PC-9 (cell line): ENCODE measurements at regions of chr12 and their contacts with region 1.

Region 1: DNA sequence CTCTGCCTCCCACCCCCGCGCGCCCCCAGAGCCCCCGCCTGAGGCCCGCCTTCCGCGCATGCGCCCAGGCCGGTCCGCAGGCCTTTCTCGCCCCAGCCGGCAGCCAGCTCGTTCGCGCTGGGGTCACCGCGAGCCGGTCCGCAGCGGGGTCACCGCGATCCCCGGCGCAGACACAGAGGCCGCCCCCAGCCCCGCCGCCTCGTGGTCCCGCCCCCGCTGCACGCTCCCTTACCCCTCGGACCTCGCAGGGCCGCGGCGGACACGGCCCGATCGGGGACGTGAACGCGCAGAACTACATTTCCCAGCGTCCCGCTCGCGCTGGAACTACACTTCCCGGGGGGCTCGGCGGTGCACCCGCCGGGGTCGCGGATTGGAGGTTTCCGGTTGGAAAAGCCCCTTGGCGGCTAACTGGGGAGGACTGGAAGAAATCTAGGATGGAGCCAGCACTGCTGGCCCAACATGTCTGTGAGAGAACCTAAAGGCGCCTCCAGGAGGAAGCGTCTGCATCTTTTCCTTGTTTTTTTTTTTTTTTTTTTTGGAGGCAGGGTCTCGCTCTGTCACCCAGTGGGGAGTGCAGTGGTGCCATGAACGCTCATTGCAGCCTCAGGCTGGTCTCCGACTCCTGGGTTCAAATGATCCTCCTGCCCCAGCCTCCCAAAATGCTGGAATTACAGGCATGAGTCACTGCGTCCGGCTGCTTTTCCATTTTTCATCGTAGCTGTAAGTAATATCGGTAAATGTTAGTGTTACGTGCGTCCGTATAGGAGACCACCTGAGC is at the start of gene ZNF605:
- DNase-seq: peak; percentile 67 to 84
- H3K4me3 ChIP-seq: peak within 1 kb of the TSS; percentile 98
- H3K27ac ChIP-seq: no peak within 1 kb of the TSS
- H3K4me1 ChIP-seq: no peaks in the 10 kb centered on the region
- H3K27me3 ChIP-seq: no peaks in the 10 kb centered on the region
- CTCF ChIP-seq: no peak
- total RNA-seq, gene ZNF605: 10.9 and 13.5 TPM in 2 replicates

Region 2: DNA sequence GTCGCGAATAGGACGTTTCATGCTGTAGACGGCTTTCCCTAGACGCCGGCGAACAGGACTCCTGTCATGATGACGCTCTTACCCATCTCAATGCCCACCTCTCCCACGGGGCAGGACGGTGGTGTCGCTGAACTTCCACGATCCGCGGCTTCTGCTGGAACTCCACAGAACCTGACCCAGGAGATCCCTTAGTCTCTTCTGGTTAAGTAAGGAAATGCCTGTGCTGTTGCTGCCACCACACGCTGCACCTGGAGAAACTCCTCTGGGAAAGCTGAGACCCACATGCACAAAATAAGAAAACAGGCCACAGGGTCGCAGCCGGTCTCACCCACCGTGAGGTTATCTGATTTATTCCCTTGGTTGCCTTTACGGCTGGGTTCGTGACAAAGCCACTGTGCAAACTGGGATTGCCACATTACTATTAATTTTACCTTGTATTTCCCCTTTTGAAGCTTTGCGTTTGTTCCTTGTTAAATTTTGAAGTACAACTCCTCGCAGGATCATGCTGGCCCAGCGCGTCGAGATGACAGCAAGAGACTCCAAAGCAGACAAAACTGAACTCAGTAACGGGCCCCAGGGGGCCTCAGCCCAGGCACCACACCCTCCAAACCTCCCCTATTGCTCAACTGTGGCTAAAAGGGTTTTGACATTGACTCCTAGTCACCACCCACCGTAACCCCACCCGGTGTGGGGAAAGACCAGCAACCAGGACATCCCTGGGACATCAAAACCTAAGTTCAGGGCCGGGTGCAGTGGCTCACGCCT is 1137.2 kb before region 1 on chr12:
- CTCF ChIA-PET with region 1: no interaction called
- POLR2A ChIA-PET with region 1: no interaction called
- intact Hi-C with region 1: no loop called
- DNase-seq: no peak
- H3K4me3 ChIP-seq: no peak overlapping the region
- H3K27ac ChIP-seq: no peak overlapping the region
- H3K4me1 ChIP-seq: no peaks in the 10 kb centered on the region
- H3K27me3 ChIP-seq: peaks cover 3% of the 10 kb centered on the region; the same call in 1 of the 2 replicates
- CTCF ChIP-seq: no peak

Region 3: GRCh38 chr12:132828706-132829534 is 127.3 kb before region 1 on chr12 and contains the start of gene GOLGA3:
- CTCF ChIA-PET with region 1: no interaction called
- POLR2A ChIA-PET with region 1: no interaction called
- intact Hi-C with region 1: loop called (anchors 2 kb)
- DNase-seq: peak; percentile 70 to 90
- H3K4me3 ChIP-seq: peak within 1 kb of the TSS; percentile 92
- H3K27ac ChIP-seq: peak within 1 kb of the TSS; percentile 91
- H3K4me1 ChIP-seq: peaks cover 13% of the 10 kb centered on the region; the same call in 1 of the 2 replicates
- H3K27me3 ChIP-seq: no peaks in the 10 kb centered on the region
- CTCF ChIP-seq: no peak
- total RNA-seq, gene GOLGA3: 69.3 and 72.7 TPM in 2 replicates

Region 4: DNA sequence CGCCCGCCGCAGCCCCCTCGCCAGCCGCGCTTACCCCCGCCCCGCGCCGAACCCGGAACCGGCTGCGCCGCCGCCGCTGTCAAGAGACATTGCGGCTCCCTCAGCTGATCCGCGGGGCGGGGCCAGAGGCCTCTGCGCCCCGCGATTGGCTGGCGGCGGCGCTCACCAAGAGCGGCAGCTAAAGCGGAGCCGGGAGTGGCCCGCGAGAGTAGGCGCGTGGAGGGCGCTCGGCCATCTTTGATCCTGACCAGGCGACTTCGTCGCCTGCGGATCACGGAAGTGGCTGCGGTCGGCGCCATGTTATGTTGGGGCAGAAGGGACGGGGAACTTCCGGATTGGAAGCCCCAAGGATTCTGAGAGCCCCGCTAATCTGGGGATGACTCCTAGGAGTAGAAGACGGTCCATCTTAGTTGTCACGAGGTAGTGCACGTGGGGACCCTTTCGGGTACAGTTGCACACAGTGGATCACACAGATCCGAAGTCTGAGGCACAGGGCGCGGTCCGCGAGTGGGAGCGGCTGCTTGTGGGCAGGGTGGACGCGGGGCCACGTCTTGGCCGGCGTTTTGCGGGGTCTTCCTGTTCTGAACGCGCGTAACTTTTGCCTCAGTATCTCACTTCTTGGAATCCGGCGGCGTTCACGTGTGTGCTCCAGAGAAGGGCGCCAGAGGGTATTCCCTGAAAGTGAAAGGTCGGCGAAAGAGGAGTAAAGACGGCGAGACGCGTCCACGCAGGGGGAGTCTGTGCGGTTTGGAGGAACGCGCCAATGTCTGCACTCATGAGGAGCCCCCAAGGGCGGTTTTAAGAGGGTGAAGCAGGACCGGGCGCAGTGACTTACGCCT is 68.5 kb before region 1 on chr12 and contains the start of gene CHFR:
- CTCF ChIA-PET with region 1: no interaction called
- POLR2A ChIA-PET with region 1: no interaction called
- intact Hi-C with region 1: loop called (anchors 1 kb)
- DNase-seq: peak; percentile 88 to 92
- H3K4me3 ChIP-seq: peak within 1 kb of the TSS; percentile 95
- H3K27ac ChIP-seq: peak within 1 kb of the TSS; percentile 88
- H3K4me1 ChIP-seq: no peaks in the 10 kb centered on the region
- H3K27me3 ChIP-seq: 0 out of 2 replicates have a peak, but pooled peaks cover 3% of the 10 kb centered on the region
- CTCF ChIP-seq: no peak
- total RNA-seq, gene CHFR: 15.5 and 17.8 TPM in 2 replicates

Region 5: GRCh38 chr12:133080368-133081158 is 124.4 kb after region 1 on chr12 and contains the start of gene ZNF140:
- CTCF ChIA-PET with region 1: no interaction called
- POLR2A ChIA-PET with region 1: interaction called, 3 read pairs
- intact Hi-C with region 1: loop called (anchors 2 kb)
- DNase-seq: peak; percentile 87 to 92
- H3K4me3 ChIP-seq: peak within 1 kb of the TSS; percentile 85
- H3K27ac ChIP-seq: peak within 1 kb of the TSS; percentile 96
- H3K4me1 ChIP-seq: peaks cover 7% of the 10 kb centered on the region; the same call in 1 of the 2 replicates
- H3K27me3 ChIP-seq: no peaks in the 10 kb centered on the region
- CTCF ChIP-seq: peak; percentile 42; the same call in 1 of the 2 replicates
- total RNA-seq, gene ZNF140: 10.2 and 11.1 TPM in 2 replicates

Region 6: DNA sequence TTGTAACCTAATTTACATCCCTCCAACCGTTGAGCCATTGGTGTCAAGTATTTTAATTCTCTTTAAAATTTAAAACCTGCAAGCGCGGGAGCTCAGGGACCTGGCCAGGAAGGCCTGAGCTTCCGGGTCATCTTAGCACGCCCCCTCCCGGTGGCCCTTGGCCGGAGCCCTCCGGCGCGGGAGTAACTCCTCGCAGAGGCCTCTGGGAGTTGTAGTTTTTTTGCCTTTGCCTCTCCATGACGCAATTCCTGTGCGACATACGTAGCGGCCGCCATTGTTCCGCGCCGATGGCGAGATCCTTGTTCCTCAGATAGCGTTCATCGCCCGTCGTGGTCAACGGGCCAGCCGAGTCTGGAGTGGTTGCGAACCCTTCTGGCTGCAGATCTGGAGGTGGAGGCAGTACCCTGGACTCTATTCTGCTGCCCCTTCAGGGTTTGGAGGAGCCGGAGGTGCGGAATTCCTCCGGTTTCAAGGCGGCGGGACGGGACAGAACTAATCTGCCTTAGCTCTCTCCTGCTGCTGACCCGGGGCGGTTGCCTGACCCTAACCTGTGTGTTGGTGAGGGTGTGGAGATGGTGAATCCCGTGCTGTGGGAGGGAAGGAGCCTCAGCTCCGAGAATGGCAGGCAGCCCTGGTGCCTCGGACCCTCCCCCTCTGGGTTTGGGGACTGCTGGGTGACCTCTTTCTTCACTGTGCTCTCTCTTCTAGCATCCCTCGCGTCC is 225.2 kb after region 1 on chr12 and contains the start of gene ZNF268:
- CTCF ChIA-PET with region 1: no interaction called
- POLR2A ChIA-PET with region 1: no interaction called
- intact Hi-C with region 1: loop called (anchors 1 kb)
- DNase-seq: peak; percentile 79 to 91
- H3K4me3 ChIP-seq: peak within 1 kb of the TSS; percentile 65
- H3K27ac ChIP-seq: peak within 1 kb of the TSS; percentile 40; the same call in 1 of the 2 replicates
- H3K4me1 ChIP-seq: no peaks in the 10 kb centered on the region
- H3K27me3 ChIP-seq: no peaks in the 10 kb centered on the region
- CTCF ChIP-seq: peak; percentile 84
- total RNA-seq, gene ZNF268: 14.0 and 14.7 TPM in 2 replicates